ENCODE measurements at regions of chr22 and their contacts with region 1.

Region 1: DNA sequence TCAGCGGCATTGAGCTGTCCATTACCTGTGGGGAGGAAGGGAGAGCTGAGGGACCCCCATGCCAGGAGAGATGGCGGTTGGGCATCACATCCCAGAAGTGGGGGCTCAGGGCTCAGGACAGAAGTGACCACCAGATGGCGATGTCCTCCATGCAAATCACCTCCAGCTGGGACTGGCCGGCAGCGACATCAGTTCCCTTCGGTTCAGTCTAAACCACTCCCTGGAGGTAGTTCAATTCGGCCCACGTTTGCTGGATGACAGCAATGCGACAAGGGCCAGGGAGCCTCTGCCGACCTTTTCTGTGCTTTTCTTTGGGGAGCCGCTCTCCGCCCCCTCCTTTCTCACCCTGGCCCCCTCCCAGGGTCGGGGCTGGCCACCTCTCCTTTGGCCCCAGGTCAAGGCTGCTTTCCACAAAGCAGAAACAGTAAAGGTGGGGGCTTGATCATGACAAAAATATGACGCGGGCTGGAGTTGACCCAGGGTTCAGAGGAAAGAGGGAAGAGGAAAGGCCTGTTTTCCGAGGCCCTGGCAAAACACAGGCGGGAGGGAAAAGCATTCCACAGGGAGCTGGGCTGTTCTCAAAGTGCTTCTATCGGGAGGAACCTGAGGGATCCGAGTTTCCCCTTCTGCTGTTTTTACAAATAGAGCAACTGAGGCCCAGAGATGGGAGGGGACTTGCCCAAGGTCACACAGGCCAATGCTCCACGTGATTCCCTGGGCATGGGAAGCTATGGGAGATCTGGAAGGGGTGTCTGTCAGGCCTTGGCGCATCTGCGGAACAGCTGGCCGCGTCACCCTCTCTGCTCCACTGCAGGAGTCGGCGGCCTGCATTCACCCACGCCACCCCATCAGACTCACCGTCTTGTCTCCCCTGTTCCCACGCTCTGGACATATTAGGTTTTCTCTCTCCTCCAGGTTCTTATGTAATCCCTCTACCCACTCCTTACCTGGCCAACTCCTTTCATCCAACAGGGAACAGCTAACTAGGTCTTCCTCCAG is 54.7 kb downstream of the FBXO7 start:
- DNase-seq: peak; percentile 82 to 85
- H3K4me3 ChIP-seq: no peak overlapping the region
- H3K4me3 Mint-ChIP-seq: no peak overlapping the region
- H3K27ac Mint-ChIP-seq: peak overlapping the region; percentile 51
- H3K4me1 ChIP-seq: peaks cover 24% of the 10 kb centered on the region
- H3K4me1 Mint-ChIP-seq: peaks cover 27% of the 10 kb centered on the region
- H3K27me3 ChIP-seq: no peaks in the 10 kb centered on the region
- H3K27me3 Mint-ChIP-seq: no peaks in the 10 kb centered on the region
- CTCF ChIP-seq: peak; percentile 80

Region 2: GRCh38 chr22:32375678-32376450 is 153.4 kb before region 1 on chr22:
- CTCF ChIA-PET with region 1: no interaction called
- POLR2A ChIA-PET with region 1: no interaction called
- intact Hi-C with region 1: no loop called
- DNase-seq: no peak
- H3K4me3 ChIP-seq: no peak overlapping the region
- H3K4me3 Mint-ChIP-seq: no peak overlapping the region
- H3K27ac Mint-ChIP-seq: no peak overlapping the region
- H3K4me1 ChIP-seq: no peaks in the 10 kb centered on the region
- H3K4me1 Mint-ChIP-seq: no peaks in the 10 kb centered on the region
- H3K27me3 ChIP-seq: no peaks in the 10 kb centered on the region
- H3K27me3 Mint-ChIP-seq: peaks cover 15% of the 10 kb centered on the region
- CTCF ChIP-seq: no peak

Region 3: GRCh38 chr22:32603656-32604435 is 74.6 kb after region 1 on chr22:
- CTCF ChIA-PET with region 1: no interaction called
- POLR2A ChIA-PET with region 1: no interaction called
- intact Hi-C with region 1: no loop called
- DNase-seq: no peak
- H3K4me3 ChIP-seq: no peak overlapping the region
- H3K4me3 Mint-ChIP-seq: no peak overlapping the region
- H3K27ac Mint-ChIP-seq: peak overlapping the region; percentile 5
- H3K4me1 ChIP-seq: peaks cover 9% of the 10 kb centered on the region
- H3K4me1 Mint-ChIP-seq: peaks cover 21% of the 10 kb centered on the region
- H3K27me3 ChIP-seq: no peaks in the 10 kb centered on the region
- H3K27me3 Mint-ChIP-seq: no peaks in the 10 kb centered on the region
- CTCF ChIP-seq: no peak

Region 4: GRCh38 chr22:32628628-32629572 is 99.6 kb after region 1 on chr22:
- CTCF ChIA-PET with region 1: no interaction called
- POLR2A ChIA-PET with region 1: no interaction called
- intact Hi-C with region 1: loop called (anchors 2 kb)
- DNase-seq: peak; percentile 63 to 64
- H3K4me3 ChIP-seq: no peak overlapping the region
- H3K4me3 Mint-ChIP-seq: peak overlapping the region; percentile 29
- H3K27ac Mint-ChIP-seq: peak overlapping the region; percentile 80
- H3K4me1 ChIP-seq: peaks cover 39% of the 10 kb centered on the region
- H3K4me1 Mint-ChIP-seq: peaks cover 29% of the 10 kb centered on the region
- H3K27me3 ChIP-seq: no peaks in the 10 kb centered on the region
- H3K27me3 Mint-ChIP-seq: no peaks in the 10 kb centered on the region
- CTCF ChIP-seq: no peak

Region 5: DNA sequence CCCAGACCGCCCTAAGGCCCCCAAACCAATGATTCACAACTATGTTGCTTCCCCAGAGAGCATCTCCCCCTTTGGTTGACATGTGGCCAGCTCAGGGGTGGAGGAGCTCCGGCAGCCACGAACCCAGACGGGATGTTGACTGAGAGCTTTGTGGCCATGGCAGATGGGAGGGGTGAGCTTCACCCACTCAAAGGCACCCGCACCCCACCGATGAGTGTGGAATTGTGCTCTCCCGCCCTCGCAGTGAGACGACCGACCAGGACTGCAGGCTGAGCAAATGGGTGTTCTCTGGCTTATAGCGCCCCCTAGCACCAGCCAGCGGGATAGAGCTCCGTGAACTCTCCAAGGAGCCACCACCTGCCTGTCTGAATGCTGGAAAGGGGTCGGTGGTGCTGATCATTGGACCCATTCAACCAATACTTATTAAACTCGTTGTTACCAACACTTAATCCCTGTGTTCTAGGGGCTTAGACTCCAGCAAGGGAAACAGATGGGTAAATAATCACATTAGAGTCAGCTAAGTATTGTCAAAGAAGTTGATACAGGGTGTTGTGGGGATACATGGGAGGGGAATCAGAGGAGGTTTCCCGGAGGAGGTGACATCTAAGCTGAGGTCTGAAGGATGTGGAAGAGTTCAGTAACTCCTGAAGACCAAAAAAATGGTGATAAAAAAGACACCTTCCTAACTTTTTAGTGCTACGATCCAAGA is 267.7 kb after region 1 on chr22:
- CTCF ChIA-PET with region 1: interaction called, 6 read pairs
- POLR2A ChIA-PET with region 1: no interaction called
- intact Hi-C with region 1: loop called (anchors 1 kb)
- DNase-seq: peak; percentile 58 to 63
- H3K4me3 ChIP-seq: no peak overlapping the region
- H3K4me3 Mint-ChIP-seq: no peak overlapping the region
- H3K27ac Mint-ChIP-seq: peak overlapping the region; percentile 17
- H3K4me1 ChIP-seq: peaks cover 6% of the 10 kb centered on the region
- H3K4me1 Mint-ChIP-seq: no peaks in the 10 kb centered on the region
- H3K27me3 ChIP-seq: no peaks in the 10 kb centered on the region
- H3K27me3 Mint-ChIP-seq: no peaks in the 10 kb centered on the region
- CTCF ChIP-seq: peak; percentile 68 to 72

Region 6: DNA sequence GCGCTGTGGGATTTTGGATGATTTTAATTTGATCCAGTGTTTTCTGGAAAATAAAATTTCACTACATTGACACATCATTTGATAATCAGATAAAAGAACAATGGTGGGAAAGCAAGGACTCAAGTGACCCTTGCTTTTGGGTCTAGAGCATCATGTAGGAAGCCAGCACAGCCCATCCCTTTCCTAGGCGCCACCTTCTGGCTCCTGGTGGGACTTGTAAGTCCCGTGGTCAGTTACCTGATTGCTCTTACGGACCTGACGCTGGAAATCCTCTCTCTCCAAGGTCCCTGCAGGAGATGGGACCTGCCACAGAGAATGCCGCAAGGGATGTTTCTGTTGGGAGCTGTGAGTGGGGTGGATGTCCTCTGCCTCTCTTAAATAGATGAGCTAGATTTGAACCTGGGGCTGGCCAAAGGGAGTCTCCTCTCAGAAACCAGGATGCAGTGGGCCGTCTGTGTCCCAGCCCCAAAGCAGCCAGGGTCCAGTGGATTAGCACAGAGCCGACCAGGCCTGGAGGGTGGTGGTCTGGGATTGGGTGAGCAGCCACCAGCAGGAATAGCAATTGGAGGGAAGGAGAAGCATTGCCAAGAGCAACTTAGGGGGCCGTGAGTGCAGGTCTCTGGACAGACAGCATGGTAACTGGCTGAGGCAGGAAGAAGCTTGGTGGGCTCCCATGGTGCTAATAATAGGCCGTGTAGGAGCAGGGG is 293.9 kb after region 1 on chr22:
- CTCF ChIA-PET with region 1: interaction called, 3 read pairs
- POLR2A ChIA-PET with region 1: no interaction called
- intact Hi-C with region 1: loop called (anchors 1 kb)
- DNase-seq: peak; percentile 67
- H3K4me3 ChIP-seq: no peak overlapping the region
- H3K4me3 Mint-ChIP-seq: no peak overlapping the region
- H3K27ac Mint-ChIP-seq: no peak overlapping the region
- H3K4me1 ChIP-seq: no peaks in the 10 kb centered on the region
- H3K4me1 Mint-ChIP-seq: peaks cover 6% of the 10 kb centered on the region
- H3K27me3 ChIP-seq: no peaks in the 10 kb centered on the region
- H3K27me3 Mint-ChIP-seq: no peaks in the 10 kb centered on the region
- CTCF ChIP-seq: peak; percentile 59 to 67

Region 7: DNA sequence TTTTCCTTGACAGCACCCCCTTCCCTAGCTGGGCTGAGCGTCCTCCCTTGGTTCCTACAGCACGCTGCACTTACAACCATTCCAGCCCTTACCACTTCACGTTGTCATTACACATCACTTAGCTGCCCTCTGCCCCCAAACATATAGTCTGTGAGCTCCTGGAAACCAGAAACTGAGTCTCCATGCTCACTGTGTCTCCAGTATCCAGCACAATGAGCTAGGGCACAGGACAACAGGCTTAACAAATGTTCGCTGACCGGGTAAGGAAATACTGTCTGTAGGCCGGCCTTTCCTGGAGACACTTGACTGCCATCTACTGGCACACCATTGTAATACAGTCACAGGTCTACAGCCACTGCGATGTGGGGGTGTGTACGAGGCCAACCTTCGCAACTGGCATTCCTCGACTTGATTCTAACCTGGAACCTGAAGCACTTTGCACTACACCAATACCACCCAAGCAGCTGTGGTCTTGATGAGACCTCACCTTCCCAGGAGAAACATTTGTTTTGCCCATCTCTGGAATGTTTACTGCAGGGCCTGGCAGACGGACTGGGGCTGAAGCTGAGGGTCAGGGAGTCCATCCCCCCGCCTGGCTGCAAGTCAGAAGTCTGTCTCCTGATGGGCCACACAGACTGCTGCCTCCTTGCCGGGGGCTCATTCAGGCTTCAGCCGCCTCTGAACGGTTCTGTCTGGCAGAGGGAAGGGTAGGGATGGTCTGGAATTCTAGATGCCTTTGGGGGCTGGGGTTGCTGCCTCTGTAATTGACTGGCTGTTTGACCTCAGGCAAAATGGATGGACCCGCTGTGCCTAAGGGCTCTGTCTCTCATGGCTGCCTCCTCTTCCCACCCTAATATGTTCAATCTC is 456.8 kb after region 1 on chr22:
- CTCF ChIA-PET with region 1: no interaction called
- POLR2A ChIA-PET with region 1: no interaction called
- intact Hi-C with region 1: loop called (anchors 2 kb)
- DNase-seq: peak; percentile 77 to 79
- H3K4me3 ChIP-seq: no peak overlapping the region
- H3K4me3 Mint-ChIP-seq: no peak overlapping the region
- H3K27ac Mint-ChIP-seq: peak overlapping the region; percentile 46
- H3K4me1 ChIP-seq: no peaks in the 10 kb centered on the region; the same call in 1 of the 2 replicates
- H3K4me1 Mint-ChIP-seq: peaks cover 13% of the 10 kb centered on the region
- H3K27me3 ChIP-seq: no peaks in the 10 kb centered on the region
- H3K27me3 Mint-ChIP-seq: peaks cover 5% of the 10 kb centered on the region
- CTCF ChIP-seq: peak; percentile 77 to 89

Region 8: DNA sequence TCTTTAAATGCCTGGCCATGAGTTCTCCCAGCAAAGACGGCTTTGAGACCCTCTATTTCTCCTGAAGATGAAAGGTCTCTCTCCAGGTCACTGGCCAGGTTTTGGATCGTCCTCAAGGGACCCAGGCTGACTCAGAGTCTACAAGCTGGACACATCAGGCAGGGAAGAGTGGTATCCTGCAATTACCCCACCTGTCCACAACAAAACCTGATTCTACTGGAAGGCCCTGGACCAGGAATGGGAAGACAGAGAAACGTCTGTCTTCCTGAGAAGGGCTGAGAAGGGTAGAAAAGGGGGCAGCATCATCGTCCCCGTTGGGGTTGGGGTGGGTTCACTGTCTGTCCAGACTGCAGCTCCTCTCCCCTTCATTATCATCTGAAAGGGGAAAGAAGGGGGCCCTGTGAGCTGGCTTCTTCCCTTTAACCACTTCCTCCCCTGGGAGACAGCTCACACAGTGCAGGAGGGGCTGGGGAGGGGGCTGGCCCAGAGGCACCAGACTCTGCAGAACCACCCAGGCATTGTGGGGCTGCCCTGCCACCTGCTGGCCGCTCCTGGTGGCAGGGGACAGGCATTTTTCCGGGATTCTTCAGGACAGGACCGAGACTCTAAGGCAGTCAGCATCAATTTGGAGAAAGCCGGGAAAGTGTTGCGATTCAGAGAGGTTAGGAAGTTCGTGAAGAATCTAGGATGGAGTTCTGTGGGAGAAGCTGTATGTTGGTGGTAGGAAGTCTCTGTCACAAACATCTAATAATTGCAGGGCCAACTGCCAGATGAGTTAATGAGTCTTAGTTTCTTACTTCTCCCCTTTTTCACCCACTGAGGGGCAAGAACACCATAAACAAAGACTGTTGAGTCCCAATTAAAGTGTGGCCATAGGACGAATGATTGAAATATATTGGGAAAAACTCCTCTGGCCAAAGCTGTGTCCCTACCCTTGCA is 471.3 kb after region 1 on chr22:
- CTCF ChIA-PET with region 1: no interaction called
- POLR2A ChIA-PET with region 1: no interaction called
- intact Hi-C with region 1: loop called (anchors 1 kb)
- DNase-seq: peak; percentile 50 to 73
- H3K4me3 ChIP-seq: no peak overlapping the region
- H3K4me3 Mint-ChIP-seq: no peak overlapping the region
- H3K27ac Mint-ChIP-seq: no peak overlapping the region
- H3K4me1 ChIP-seq: no peaks in the 10 kb centered on the region
- H3K4me1 Mint-ChIP-seq: no peaks in the 10 kb centered on the region
- H3K27me3 ChIP-seq: no peaks in the 10 kb centered on the region
- H3K27me3 Mint-ChIP-seq: peaks cover 5% of the 10 kb centered on the region
- CTCF ChIP-seq: peak; percentile 89 to 92